GM13977 (cell line): ENCODE measurements at regions of chr2 and their contacts with region 1.

Region 1: DNA sequence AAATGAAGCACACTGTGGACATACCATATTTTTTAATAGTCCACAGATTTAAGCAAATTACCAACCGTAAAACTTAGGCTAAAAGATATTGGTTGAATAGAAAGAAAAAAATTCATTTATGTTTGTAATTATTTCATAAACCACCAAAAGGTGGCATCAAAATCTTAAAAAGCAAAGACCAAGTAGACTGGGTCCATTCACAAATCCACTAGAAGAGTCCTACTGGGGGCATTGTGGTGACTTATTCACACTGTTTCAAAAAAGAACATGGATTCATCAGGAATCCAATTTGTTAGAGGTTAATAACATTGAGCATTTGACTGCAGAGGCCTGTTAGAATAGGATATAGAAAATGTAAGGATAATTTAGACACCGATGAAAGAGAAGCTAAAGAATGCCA is 194.9 kb upstream of the KYNU start:
- DNase-seq: no peak
- CTCF ChIP-seq: no peak

Region 2: DNA sequence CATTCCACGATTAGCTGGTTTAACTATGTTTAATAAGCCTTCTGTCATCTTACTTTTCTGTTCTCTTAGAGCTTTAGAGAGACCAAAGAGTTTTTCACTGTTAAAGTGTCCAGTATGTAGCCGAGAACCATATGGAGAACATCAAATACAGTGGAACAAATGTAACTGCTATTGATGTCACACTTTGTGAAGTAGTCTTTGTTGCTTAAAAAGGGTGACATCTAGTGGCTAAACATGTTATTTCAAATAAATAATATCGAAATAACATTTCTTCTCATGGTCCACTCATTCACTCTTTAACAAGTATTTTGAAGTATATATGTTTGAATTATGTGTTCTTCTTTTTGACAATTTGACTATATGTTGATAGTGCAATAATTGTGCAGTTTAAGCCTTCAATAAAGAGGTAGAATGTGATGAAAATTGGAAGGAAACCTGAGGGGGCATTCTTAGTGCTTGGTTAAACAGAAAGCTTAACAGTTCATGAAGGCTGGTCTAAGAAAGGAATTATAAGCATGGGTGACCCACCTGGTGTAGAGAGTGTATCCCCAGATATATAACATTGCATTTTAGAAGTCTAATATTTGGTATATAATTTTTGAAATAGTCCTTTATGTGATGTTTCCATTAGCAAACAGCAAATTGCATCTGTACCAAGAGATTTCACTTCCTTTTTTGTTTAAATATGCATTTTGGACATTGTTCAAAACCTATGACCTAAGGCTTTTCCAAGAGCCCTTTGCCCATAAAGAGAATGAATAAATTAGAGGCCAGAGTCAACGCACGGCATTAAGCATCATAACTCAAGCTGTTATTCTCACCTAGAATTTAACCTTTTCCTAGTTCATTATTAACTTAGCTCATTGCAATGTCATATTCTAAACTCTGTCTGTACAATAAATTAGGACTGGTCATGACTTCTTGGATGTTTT is 307.0 kb after region 1 on chr2:
- in situ Hi-C with region 1: loop called (anchors 25 kb)
- DNase-seq: peak; percentile 5
- CTCF ChIP-seq: peak; percentile 44